ENCODE measurements at regions of chr2 and their contacts with region 1.

Region 1: DNA sequence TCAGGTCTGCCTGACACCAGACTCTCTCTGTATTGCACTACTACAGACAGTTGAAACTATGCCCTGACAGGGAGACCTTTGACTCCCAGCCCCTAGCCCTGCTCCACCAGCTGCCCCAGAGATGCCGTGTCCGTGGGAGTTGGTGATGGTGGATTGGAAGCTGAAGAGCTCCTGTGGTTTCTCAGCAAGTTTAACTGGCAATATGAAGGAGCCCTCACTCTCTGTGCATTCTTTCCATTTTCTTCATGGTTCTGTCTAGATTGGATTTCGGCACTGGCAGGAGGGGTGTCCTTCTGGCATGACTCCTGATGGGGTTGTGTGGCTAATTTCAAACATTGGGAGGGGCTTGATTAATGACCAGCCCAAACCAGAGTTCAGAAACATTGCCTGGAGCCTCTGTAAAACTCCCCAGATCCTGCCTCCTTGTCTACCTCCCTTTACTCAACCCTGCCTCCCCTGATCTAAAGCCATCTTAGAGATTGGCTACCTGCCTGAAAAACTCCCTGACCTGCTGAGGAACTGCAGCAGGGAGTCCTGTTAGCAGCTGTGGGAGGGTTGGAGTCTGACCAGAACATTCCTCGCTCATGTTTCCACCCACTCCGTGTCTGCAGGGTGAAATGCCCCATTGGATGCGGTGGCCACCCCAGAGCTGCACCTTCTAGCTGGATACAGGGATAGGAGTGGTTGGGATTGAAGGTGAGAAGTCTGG is 206.9 kb upstream of the SPRED2 start:
- DNase-seq: no peak
- ATAC-seq: peak in 1 of 2 experiments; percentile 8; a peak in 3 of 6 replicates
- H3K4me3 ChIP-seq: peak overlapping the region; percentile 42; the same call in 2 of the 3 replicates
- H3K27ac ChIP-seq: no peak overlapping the region; a peak in 1 of 6 replicates
- H3K4me1 ChIP-seq: peaks cover 9% of the 10 kb centered on the region; the same call in 2 of the 3 replicates
- CTCF ChIP-seq: no peak
- EP300 ChIP-seq: no peak
- POLR2A ChIP-seq: no peak
- RAD21 ChIP-seq: no peak

Region 2: DNA sequence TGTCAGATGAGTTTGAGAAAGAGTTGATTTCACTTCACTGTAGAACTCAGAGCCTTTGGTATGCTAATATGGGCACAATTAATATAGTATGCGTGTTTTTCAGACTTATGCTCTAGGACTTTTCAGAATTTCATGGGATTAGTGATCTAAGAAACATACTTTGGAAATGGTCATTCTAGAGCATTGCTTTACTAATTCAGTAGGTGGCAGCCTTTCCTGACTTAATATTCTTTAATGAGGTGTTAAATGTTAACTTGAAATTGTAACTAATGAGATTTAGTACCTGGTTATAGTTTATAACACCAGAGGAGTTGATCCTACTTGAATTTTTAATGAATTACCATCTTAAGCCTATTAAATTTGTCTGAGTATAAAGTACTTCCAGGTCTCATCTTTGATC is 383.3 kb before region 1 on chr2:
- CTCF ChIA-PET with region 1: no interaction called
- POLR2A ChIA-PET with region 1: no interaction called
- DNase-seq: no peak
- ATAC-seq: no peak; a peak in 1 of 6 replicates
- H3K4me3 ChIP-seq: no peak overlapping the region
- H3K27ac ChIP-seq: no peak overlapping the region
- H3K4me1 ChIP-seq: no peaks in the 10 kb centered on the region
- CTCF ChIP-seq: peak; percentile 52
- EP300 ChIP-seq: no peak
- POLR2A ChIP-seq: no peak
- RAD21 ChIP-seq: peak in 1 of 2 experiments; percentile 29; a peak in 1 of 5 replicates

Region 3: GRCh38 chr2:65620524-65620923 is 18.8 kb before region 1 on chr2:
- CTCF ChIA-PET with region 1: interaction called, 13 read pairs
- POLR2A ChIA-PET with region 1: no interaction called
- DNase-seq: no peak
- ATAC-seq: peak in 1 of 2 experiments; percentile 47; a peak in 2 of 6 replicates
- H3K4me3 ChIP-seq: no peak overlapping the region
- H3K27ac ChIP-seq: no peak overlapping the region
- H3K4me1 ChIP-seq: no peaks in the 10 kb centered on the region
- CTCF ChIP-seq: no peak
- EP300 ChIP-seq: no peak
- POLR2A ChIP-seq: no peak
- RAD21 ChIP-seq: peak; percentile 28 to 31; a peak in 1 of 5 replicates

Region 4: DNA sequence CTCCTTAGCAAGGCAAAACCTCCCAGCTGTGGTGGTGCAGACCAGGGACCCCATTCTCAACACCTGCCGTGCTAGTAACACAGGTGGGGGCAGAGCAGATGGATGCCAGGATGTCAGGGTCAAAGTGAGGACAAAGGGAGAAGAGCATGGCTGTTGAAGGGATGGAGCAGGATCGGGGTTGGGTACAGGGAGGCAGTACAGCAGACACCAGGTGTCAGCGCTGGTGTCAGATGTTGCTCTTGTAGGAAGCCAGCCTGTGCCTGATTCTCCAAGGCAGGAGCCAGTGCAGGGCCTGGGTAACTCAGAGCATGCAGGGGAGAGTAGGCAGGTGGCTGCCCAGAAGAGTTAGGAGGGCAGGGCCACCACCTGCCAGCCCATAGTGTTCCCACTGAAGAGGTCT is 15.2 kb after region 1 on chr2:
- CTCF ChIA-PET with region 1: interaction called, 20 read pairs
- POLR2A ChIA-PET with region 1: no interaction called
- DNase-seq: no peak
- ATAC-seq: peak; percentile 23 to 28; a peak in 1 of 6 replicates
- H3K4me3 ChIP-seq: no peak overlapping the region
- H3K27ac ChIP-seq: no peak overlapping the region
- H3K4me1 ChIP-seq: no peaks in the 10 kb centered on the region
- CTCF ChIP-seq: no peak
- EP300 ChIP-seq: no peak
- POLR2A ChIP-seq: no peak
- RAD21 ChIP-seq: no peak

Measured in A549 (cell line).